B cell (primary cell): ENCODE measurements at regions of chr10 and their contacts with region 1.

Region 1: GRCh38 chr10:119305860-119306513 is 98.6 kb downstream of the GRK5 start:
- DNase-seq: peak; percentile 90
- ATAC-seq: peak; percentile 71
- H3K4me3 ChIP-seq: peak overlapping the region; percentile 31 to 62 (median 42)
- H3K4me3 Mint-ChIP-seq: peak overlapping the region; percentile 87
- H3K27ac ChIP-seq: peak overlapping the region; percentile 99
- H3K27ac Mint-ChIP-seq: peak overlapping the region; percentile 99
- H3K4me1 ChIP-seq: peaks cover 97 to 100% of the 10 kb centered on the region in 2 donors
- H3K4me1 Mint-ChIP-seq: peaks cover 95% of the 10 kb centered on the region
- H3K27me3 ChIP-seq: no peaks in the 10 kb centered on the region
- H3K27me3 Mint-ChIP-seq: no peaks in the 10 kb centered on the region
- CTCF ChIP-seq: no peak

Region 2: DNA sequence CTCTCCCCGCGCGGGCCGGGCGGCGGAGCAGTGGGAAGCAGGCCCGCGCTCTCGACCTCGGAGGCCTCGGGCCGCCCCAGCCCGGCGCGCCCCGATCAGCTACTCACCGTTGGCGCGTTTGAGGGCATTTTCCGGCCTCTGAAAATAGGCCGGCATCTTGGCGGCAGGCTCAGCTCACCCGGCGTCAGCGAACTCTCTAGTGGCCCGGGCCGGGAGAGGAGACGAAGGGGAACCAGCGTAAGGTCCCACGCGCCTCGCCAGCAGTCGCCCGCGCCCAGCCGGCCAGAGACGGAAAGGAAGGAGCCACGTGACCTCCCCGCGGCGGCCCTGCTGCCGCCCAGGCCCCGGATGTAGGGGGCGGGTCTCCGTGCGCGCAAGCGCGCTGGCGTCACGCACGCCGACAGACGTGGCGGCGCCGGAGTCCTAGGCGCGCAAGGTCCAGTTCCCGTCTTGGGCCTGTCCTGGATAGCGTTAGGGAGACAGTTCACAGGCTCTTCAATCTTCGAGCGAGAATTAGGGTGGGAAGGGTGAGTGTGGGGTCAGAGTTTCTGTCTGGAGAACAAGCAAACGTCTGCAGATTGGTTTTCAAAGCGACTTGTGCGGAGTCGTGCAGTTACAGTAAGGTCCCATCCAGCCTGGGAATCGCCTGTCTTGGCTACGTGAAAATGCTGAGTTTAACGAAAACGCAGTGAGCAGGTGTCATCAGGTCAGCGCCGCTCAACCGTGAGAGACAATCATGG is 225.3 kb before region 1 on chr10 and contains the start of gene EIF3A:
- CTCF ChIA-PET with region 1: no interaction called
- POLR2A ChIA-PET with region 1: no interaction called
- intact Hi-C with region 1: loop called (anchors 10 kb)
- DNase-seq: peak; percentile 95
- ATAC-seq: peak; percentile 81
- H3K4me3 ChIP-seq: peak within 1 kb of the TSS; percentile 69 to 93 (median 86)
- H3K4me3 Mint-ChIP-seq: peak within 1 kb of the TSS; percentile 96
- H3K27ac ChIP-seq: peak within 1 kb of the TSS; percentile 92 to 97
- H3K27ac Mint-ChIP-seq: peak within 1 kb of the TSS; percentile 96
- H3K4me1 ChIP-seq: peaks cover 36 to 52% of the 10 kb centered on the region in 2 donors
- H3K4me1 Mint-ChIP-seq: peaks cover 50% of the 10 kb centered on the region
- H3K27me3 ChIP-seq: no peaks in the 10 kb centered on the region
- H3K27me3 Mint-ChIP-seq: no peaks in the 10 kb centered on the region
- CTCF ChIP-seq: no peak
- total RNA-seq, gene EIF3A: 94.3 and 94.5 TPM in 2 replicates

Region 3: GRCh38 chr10:119253433-119254174 is 52.4 kb before region 1 on chr10:
- CTCF ChIA-PET with region 1: no interaction called
- POLR2A ChIA-PET with region 1: no interaction called
- intact Hi-C with region 1: no loop called
- DNase-seq: no peak
- ATAC-seq: no peak
- H3K4me3 ChIP-seq: no peak overlapping the region
- H3K4me3 Mint-ChIP-seq: no peak overlapping the region
- H3K27ac ChIP-seq: no peak overlapping the region
- H3K27ac Mint-ChIP-seq: peak overlapping the region; percentile 63
- H3K4me1 ChIP-seq: peaks cover 0 to 6% of the 10 kb centered on the region in 2 donors
- H3K4me1 Mint-ChIP-seq: peaks cover 45% of the 10 kb centered on the region
- H3K27me3 ChIP-seq: no peaks in the 10 kb centered on the region
- H3K27me3 Mint-ChIP-seq: no peaks in the 10 kb centered on the region
- CTCF ChIP-seq: no peak

Region 4: DNA sequence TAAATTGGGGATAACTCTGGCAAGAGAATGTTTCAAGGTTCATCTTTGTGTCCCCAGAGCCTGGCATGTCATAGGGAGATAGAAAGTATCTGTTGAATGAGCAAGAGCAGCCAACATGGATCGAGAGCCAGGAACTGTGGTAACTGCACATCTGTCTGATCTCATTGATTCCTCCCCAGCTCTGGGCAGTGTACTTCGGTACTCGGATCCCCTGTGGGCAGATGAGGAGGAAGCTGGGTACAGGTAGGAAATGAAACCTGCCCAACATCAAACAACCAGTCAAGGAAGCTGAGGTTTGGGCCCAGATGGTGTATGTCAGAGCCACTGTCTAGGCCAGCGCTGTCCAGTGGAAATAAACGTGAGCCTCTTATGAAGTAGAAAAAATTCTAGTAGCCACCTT is 22.2 kb before region 1 on chr10:
- CTCF ChIA-PET with region 1: interaction called, 11 read pairs
- POLR2A ChIA-PET with region 1: interaction called, 6 read pairs
- intact Hi-C with region 1: loop called (anchors 1 kb)
- DNase-seq: peak; percentile 78
- ATAC-seq: peak; percentile 93
- H3K4me3 ChIP-seq: no peak overlapping the region
- H3K4me3 Mint-ChIP-seq: peak overlapping the region; percentile 63
- H3K27ac ChIP-seq: peak overlapping the region; percentile 65 to 74
- H3K27ac Mint-ChIP-seq: peak overlapping the region; percentile 85
- H3K4me1 ChIP-seq: peaks cover 47 to 60% of the 10 kb centered on the region in 2 donors
- H3K4me1 Mint-ChIP-seq: peaks cover 81% of the 10 kb centered on the region
- H3K27me3 ChIP-seq: no peaks in the 10 kb centered on the region
- H3K27me3 Mint-ChIP-seq: no peaks in the 10 kb centered on the region
- CTCF ChIP-seq: no peak

Region 5: GRCh38 chr10:119395280-119395989 is 89.4 kb after region 1 on chr10:
- CTCF ChIA-PET with region 1: no interaction called
- POLR2A ChIA-PET with region 1: interaction called, 5 read pairs
- intact Hi-C with region 1: loop called (anchors 1 kb)
- DNase-seq: peak; percentile 75
- ATAC-seq: peak; percentile 83
- H3K4me3 ChIP-seq: no peak overlapping the region
- H3K4me3 Mint-ChIP-seq: peak overlapping the region; percentile 83
- H3K27ac ChIP-seq: peak overlapping the region; percentile 65 to 91
- H3K27ac Mint-ChIP-seq: peak overlapping the region; percentile 96
- H3K4me1 ChIP-seq: peaks cover 37% of the 10 kb centered on the region in 2 donors
- H3K4me1 Mint-ChIP-seq: peaks cover 46% of the 10 kb centered on the region
- H3K27me3 ChIP-seq: no peaks in the 10 kb centered on the region
- H3K27me3 Mint-ChIP-seq: no peaks in the 10 kb centered on the region
- CTCF ChIP-seq: no peak

Region 6: GRCh38 chr10:119478111-119478802 is 172.3 kb after region 1 on chr10:
- CTCF ChIA-PET with region 1: no interaction called
- POLR2A ChIA-PET with region 1: interaction called, 3 read pairs
- intact Hi-C with region 1: loop called (anchors 2 kb)
- DNase-seq: peak; percentile 77
- ATAC-seq: peak; percentile 95
- H3K4me3 ChIP-seq: peak overlapping the region in 2 of 5 experiments; percentile 5 to 42
- H3K4me3 Mint-ChIP-seq: peak overlapping the region; percentile 87
- H3K27ac ChIP-seq: peak overlapping the region; percentile 47 to 62
- H3K27ac Mint-ChIP-seq: peak overlapping the region; percentile 81
- H3K4me1 ChIP-seq: peaks cover 27 to 31% of the 10 kb centered on the region in 2 donors
- H3K4me1 Mint-ChIP-seq: peaks cover 37% of the 10 kb centered on the region
- H3K27me3 ChIP-seq: no peaks in the 10 kb centered on the region
- H3K27me3 Mint-ChIP-seq: no peaks in the 10 kb centered on the region
- CTCF ChIP-seq: no peak

Region 7: GRCh38 chr10:119542988-119543813 is 237.2 kb after region 1 on chr10:
- CTCF ChIA-PET with region 1: no interaction called
- POLR2A ChIA-PET with region 1: no interaction called
- intact Hi-C with region 1: loop called (anchors 2 kb)
- DNase-seq: peak; percentile 81
- ATAC-seq: peak; percentile 46
- H3K4me3 ChIP-seq: peak overlapping the region in 4 of 5 experiments; percentile 58 to 78 (median 72)
- H3K4me3 Mint-ChIP-seq: peak overlapping the region; percentile 95
- H3K27ac ChIP-seq: no peak overlapping the region
- H3K27ac Mint-ChIP-seq: peak overlapping the region; percentile 85
- H3K4me1 ChIP-seq: peaks cover 11 to 22% of the 10 kb centered on the region in 2 donors
- H3K4me1 Mint-ChIP-seq: peaks cover 29% of the 10 kb centered on the region
- H3K27me3 ChIP-seq: peaks cover 0 to 3% (median 0%) of the 10 kb centered on the region in 4 experiments
- H3K27me3 Mint-ChIP-seq: peaks cover 8% of the 10 kb centered on the region
- CTCF ChIP-seq: peak; percentile 71